ENCODE measurements at regions of chr22 and their contacts with region 1.

Region 1: DNA sequence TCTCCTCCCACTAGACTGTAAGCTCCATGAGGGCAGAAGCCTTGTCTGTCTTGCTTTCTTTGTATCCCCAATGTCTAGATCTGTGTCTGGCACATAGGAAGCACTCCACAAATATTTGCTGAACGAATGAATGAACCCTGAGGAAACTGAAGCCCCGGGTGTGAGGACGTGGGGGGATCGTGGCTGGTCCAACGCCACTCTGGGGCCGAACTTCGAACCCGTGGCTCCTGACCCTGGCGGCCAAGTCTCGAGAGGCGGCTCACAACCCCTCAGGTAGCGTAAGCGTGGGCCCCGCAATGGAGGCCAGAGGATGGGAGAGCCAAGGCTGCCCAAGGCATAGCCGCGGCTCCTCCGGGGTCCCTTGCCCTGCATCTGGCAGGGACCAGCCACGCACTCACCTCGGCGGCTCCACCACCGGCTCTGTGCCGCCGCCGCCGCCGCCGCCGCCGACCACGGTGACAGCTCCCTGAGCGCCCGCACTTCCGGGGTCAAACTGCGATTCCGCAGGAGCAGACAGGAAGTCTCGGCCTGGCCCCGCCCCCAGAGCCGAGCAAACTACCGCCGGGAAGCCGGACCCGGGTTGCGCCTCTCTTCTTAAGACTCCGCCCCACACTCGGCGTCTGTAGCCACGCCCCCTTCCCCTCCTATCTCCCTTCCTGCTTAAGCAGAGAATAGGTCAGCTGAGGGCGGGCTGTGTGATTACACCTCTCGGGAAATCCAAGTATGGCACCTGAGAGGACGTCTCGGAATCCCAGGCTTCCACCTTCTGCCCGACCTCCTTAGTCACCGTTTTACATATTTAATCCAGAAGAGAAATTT is at the start of gene ASCC2:
- DNase-seq: peak; percentile 100
- ATAC-seq: peak; percentile 99
- H3K4me3 Mint-ChIP-seq: peak within 1 kb of the TSS; percentile 99
- H3K27ac Mint-ChIP-seq: peak within 1 kb of the TSS; percentile 97
- H3K4me1 Mint-ChIP-seq: peaks cover 36% of the 10 kb centered on the region
- H3K27me3 Mint-ChIP-seq: no peaks in the 10 kb centered on the region
- total RNA-seq, gene ASCC2: 56.0 to 69.9 TPM

Region 2: DNA sequence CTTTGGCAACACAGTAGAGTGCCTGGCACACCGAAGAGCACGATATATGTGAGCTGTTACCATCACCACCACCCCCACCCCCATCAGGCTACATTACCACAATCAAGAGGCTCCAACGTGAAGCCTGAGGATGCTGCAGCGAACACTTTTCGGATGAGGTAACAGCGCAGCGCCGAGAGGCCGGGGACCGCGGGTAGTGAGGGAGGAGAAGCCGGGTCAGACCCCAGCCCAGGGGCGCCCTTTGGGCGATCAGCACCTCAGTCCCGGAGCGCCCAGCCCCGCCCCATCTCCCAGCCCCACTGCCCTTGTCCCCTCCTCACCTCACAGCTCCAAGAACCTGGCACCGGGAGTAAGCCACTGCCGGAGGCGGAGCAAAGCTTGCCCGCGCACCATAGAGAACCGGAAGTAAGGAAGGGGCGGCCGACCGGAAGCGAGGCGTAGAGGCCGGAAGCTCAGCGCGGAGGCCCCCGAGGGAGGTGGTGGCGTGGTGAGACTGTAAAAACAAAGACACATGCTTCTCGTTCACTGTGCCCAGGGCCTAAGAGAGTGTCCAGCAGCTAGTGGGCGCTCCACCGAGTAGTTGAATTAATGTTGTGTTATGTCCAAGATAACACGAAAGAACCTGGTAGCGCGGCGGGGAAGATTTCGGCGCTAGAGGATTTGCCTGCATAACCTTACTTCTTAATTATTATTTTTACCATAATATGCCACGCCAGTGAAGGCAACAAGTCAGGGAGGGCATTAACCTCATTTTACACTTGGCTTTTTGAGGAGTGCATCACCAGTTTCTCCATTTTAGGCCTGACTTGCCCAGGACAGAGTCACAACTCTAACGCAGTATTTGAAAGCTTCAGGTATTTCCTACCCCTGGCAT is 284.4 kb before region 1 on chr22 and contains the start of gene THOC5:
- CTCF ChIA-PET with region 1: no interaction called
- POLR2A ChIA-PET with region 1: no interaction called
- intact Hi-C with region 1: loop called in 1 of 2 experiments (anchors 1 kb)
- DNase-seq: peak; percentile 94
- ATAC-seq: peak; percentile 99
- H3K4me3 Mint-ChIP-seq: peak within 1 kb of the TSS; percentile 96
- H3K27ac Mint-ChIP-seq: peak within 1 kb of the TSS; percentile 92
- H3K4me1 Mint-ChIP-seq: peaks cover 13% of the 10 kb centered on the region
- H3K27me3 Mint-ChIP-seq: no peaks in the 10 kb centered on the region
- total RNA-seq, gene THOC5: 52.4 to 65.7 TPM

Region 3: GRCh38 chr22:29820961-29821789 is 16.8 kb before region 1 on chr22:
- CTCF ChIA-PET with region 1: no interaction called
- POLR2A ChIA-PET with region 1: no interaction called
- intact Hi-C with region 1: loop called in 1 of 2 experiments (anchors 1 kb)
- DNase-seq: peak; percentile 79
- ATAC-seq: peak; percentile 98
- H3K4me3 Mint-ChIP-seq: no peak overlapping the region
- H3K27ac Mint-ChIP-seq: peak overlapping the region; percentile 76
- H3K4me1 Mint-ChIP-seq: peaks cover 9% of the 10 kb centered on the region
- H3K27me3 Mint-ChIP-seq: no peaks in the 10 kb centered on the region

Region 4: GRCh38 chr22:30079952-30080533 is 242.1 kb after region 1 on chr22 and contains the start of gene HORMAD2:
- CTCF ChIA-PET with region 1: no interaction called
- POLR2A ChIA-PET with region 1: no interaction called
- intact Hi-C with region 1: loop called in 1 of 2 experiments (anchors 10 kb)
- DNase-seq: peak; percentile 12
- ATAC-seq: no peak
- H3K4me3 Mint-ChIP-seq: no peak within 1 kb of the TSS
- H3K27ac Mint-ChIP-seq: no peak within 1 kb of the TSS
- H3K4me1 Mint-ChIP-seq: peaks cover 14% of the 10 kb centered on the region
- H3K27me3 Mint-ChIP-seq: peaks cover 3% of the 10 kb centered on the region
- total RNA-seq, gene HORMAD2: not detected

Region 5: DNA sequence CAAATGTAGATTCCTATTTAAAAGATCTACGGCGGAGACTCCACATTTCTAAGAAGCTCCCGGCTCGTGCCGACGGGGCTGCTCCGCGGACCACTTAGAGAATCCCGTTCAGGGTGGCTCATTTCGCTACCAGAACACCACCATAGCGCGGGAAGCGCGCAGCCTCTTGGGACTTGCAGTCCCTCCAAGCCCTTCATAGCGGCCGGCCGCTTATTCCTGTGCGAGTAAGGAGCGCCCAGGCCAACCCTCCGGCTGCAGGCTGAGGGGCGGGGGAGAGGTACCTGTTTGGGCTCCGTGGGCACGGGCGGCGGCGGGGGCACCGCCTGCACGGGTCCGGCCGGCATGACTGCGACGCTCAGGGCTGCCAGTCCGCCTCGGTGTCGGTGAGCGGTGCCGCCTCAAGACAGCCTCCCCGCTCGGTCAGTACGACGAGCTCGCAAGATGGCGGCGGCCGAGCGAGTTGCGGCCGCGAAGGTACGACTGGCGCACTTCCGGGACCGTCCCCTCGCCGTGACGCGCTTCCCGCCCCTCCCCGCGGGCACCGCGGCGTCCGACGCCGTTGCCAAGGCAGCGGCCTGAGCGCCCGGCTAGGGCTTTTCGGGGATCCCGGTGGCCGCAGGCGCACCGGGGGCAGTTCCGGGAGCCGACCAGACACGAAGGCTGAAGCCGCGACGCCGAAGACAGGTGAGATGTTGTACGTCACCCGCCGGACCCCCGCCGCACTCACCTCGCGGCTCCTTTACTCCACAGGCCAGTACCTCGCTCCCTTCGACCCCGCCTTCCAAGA is 518.7 kb after region 1 on chr22 and contains the starts of genes CCDC157 and SF3A1:
- CTCF ChIA-PET with region 1: no interaction called
- POLR2A ChIA-PET with region 1: no interaction called
- intact Hi-C with region 1: loop called in 1 of 2 experiments (anchors 2 kb)
- DNase-seq: peak; percentile 94
- ATAC-seq: peak; percentile 93
- H3K4me3 Mint-ChIP-seq: peak within 1 kb of the TSS; percentile 92
- H3K27ac Mint-ChIP-seq: peak within 1 kb of the TSS; percentile 90
- H3K4me1 Mint-ChIP-seq: peaks cover 48% of the 10 kb centered on the region
- H3K27me3 Mint-ChIP-seq: no peaks in the 10 kb centered on the region
- total RNA-seq, gene CCDC157: 2.4 to 3.7 TPM
- total RNA-seq, gene SF3A1: 254 to 499 TPM